CD4-positive, alpha-beta T cell (primary cell): ENCODE measurements at regions of chr2 and their contacts with region 1.

Region 1: GRCh38 chr2:101949304-101949703 is 42.5 kb upstream of the IL1R2 start:
- DNase-seq: no peak
- ATAC-seq: no peak
- H3K4me3 ChIP-seq: no peak overlapping the region
- H3K4me3 Mint-ChIP-seq: no peak overlapping the region
- H3K27ac ChIP-seq: no peak overlapping the region
- H3K27ac Mint-ChIP-seq: no peak overlapping the region
- H3K4me1 ChIP-seq: no peaks in the 10 kb centered on the region
- H3K4me1 Mint-ChIP-seq: no peaks in the 10 kb centered on the region
- H3K27me3 ChIP-seq: peaks cover 0 to 3% of the 10 kb centered on the region in 2 experiments
- H3K27me3 Mint-ChIP-seq: no peaks in the 10 kb centered on the region
- CTCF ChIP-seq: no peak

Region 2: DNA sequence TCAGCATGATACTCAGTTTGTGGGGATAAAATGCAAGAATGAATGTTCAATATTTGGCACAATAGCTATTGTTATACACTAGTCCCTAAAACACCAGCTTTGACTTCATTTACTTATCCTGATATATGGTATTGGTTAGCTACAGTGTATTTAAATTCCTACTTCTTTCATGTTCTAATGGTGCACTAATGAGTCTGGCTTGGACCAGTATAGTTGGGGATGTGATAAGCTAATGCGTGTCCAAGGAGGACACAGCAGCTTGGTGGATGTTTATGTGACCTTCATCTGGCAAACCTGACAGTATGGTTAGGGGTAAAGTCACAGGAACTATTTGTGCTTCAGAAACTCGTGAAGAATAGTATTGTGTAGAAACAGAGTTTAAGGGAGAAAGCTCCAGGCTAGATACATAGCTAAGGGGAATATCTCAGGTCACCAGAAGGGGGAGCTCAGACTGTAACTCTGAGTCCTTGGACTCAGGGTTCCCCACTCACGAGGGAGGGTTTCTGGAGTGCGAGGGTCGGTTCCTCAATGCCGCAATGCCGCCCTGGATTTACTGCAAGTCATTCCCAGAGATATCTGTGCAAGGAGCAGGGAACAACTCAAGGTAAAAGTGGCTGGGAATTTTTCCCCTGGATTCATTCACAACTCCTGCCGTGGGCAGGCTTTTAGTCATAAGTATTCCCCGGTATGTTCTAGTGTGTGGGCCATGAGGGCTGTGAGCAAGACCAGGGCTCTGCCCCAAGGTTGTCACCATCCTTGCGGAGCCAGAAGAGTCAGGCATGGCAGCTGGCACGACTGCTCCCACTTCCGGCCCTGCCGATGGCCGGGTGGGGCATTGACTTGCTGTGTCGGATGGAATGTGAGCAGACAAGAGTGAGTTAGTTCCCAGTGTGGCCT is 56.9 kb after region 1 on chr2:
- CTCF ChIA-PET with region 1: no interaction called
- POLR2A ChIA-PET with region 1: no interaction called
- intact Hi-C with region 1: loop called in 1 of 2 experiments (anchors 5 kb)
- DNase-seq: peak in 7 of 14 experiments; percentile 9 to 68 (median 41)
- ATAC-seq: peak; percentile 51
- H3K4me3 ChIP-seq: no peak overlapping the region
- H3K4me3 Mint-ChIP-seq: no peak overlapping the region
- H3K27ac ChIP-seq: no peak overlapping the region
- H3K27ac Mint-ChIP-seq: no peak overlapping the region
- H3K4me1 ChIP-seq: peaks cover 15% of the 10 kb centered on the region
- H3K4me1 Mint-ChIP-seq: no peaks in the 10 kb centered on the region
- H3K27me3 ChIP-seq: no peaks in the 10 kb centered on the region
- H3K27me3 Mint-ChIP-seq: no peaks in the 10 kb centered on the region
- CTCF ChIP-seq: peak; percentile 63